IMR-90 (cell line): ENCODE measurements at regions of chr10 and their contacts with region 1.

Region 1: GRCh38 chr10:33341637-33342036 is 7.2 kb upstream of the NRP1 start:
- DNase-seq: peak; percentile 62
- ATAC-seq: peak; percentile 25; the same call in 1 of the 2 replicates
- H3K4me3 ChIP-seq: no peak overlapping the region; the same call in 1 of the 2 replicates
- H3K27ac ChIP-seq: no peak overlapping the region
- H3K4me1 ChIP-seq: peaks cover 11% of the 10 kb centered on the region
- H3K27me3 ChIP-seq: no peaks in the 10 kb centered on the region
- CTCF ChIP-seq: no peak
- POLR2A ChIP-seq: no peak
- RAD21 ChIP-seq: no peak

Region 2: DNA sequence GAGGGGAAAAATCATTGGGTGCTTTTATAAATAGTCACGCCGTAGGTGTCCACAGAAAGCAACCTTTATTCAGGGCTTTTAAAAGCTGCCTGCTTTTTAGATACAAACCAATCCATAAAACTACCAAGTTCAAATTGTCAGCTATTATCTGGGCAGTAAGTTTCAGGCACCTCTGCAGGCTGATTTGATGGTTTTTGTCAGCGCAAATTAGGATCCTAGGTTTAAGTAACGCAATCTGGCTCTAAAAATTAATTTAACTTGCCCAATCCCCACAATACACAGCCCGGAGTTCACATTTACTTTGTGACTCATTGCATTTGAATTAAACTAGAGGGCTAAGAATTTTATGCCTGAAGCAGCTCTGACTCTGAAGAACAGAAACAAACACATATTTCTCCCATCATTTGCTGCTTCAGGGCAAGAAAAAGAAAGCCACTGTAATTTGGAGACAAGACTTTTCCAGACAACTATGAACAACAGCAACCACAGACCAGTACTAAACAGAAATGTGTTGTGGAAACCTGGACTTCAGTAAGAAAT is 50.5 kb before region 1 on chr10:
- CTCF ChIA-PET with region 1: no interaction called
- POLR2A ChIA-PET with region 1: no interaction called
- dilution Hi-C with region 1: no loop called
- in situ Hi-C with region 1: no loop called
- intact Hi-C with region 1: no loop called
- DNase-seq: peak; percentile 87
- ATAC-seq: peak; percentile 93
- H3K4me3 ChIP-seq: no peak overlapping the region
- H3K27ac ChIP-seq: peak overlapping the region; percentile 49
- H3K4me1 ChIP-seq: peaks cover 14% of the 10 kb centered on the region
- H3K27me3 ChIP-seq: no peaks in the 10 kb centered on the region
- CTCF ChIP-seq: no peak
- POLR2A ChIP-seq: no peak
- RAD21 ChIP-seq: no peak

Region 3: DNA sequence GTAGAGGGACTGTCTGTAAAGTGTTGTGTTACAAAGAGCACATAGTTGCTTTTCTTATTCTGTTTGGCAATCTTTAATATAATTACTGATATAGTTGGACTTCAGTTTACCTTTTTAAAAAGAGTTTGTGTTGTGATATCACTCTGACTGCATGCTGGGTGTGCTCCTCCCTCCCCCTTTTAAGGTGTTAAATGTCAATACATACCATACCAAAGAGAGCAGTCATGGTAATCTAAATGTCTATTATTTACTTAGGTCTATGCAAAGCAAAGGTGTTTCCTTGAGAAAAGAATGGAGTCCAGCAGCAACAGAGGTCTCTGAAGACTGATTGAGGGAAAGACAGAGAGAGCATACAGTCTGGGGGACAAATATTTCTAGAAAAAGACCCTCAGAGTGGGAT is 267.9 kb after region 1 on chr10:
- CTCF ChIA-PET with region 1: no interaction called
- POLR2A ChIA-PET with region 1: no interaction called
- dilution Hi-C with region 1: no loop called
- in situ Hi-C with region 1: no loop called
- intact Hi-C with region 1: loop called (anchors 5 kb)
- DNase-seq: no peak
- ATAC-seq: no peak
- H3K4me3 ChIP-seq: no peak overlapping the region
- H3K27ac ChIP-seq: no peak overlapping the region
- H3K4me1 ChIP-seq: 0 out of 2 replicates have a peak, but pooled peaks cover 1% of the 10 kb centered on the region
- H3K27me3 ChIP-seq: no peaks in the 10 kb centered on the region; the same call in 1 of the 2 replicates
- CTCF ChIP-seq: no peak
- POLR2A ChIP-seq: no peak
- RAD21 ChIP-seq: no peak